ENCODE measurements at regions of chr18 and their contacts with region 1.

Region 1: DNA sequence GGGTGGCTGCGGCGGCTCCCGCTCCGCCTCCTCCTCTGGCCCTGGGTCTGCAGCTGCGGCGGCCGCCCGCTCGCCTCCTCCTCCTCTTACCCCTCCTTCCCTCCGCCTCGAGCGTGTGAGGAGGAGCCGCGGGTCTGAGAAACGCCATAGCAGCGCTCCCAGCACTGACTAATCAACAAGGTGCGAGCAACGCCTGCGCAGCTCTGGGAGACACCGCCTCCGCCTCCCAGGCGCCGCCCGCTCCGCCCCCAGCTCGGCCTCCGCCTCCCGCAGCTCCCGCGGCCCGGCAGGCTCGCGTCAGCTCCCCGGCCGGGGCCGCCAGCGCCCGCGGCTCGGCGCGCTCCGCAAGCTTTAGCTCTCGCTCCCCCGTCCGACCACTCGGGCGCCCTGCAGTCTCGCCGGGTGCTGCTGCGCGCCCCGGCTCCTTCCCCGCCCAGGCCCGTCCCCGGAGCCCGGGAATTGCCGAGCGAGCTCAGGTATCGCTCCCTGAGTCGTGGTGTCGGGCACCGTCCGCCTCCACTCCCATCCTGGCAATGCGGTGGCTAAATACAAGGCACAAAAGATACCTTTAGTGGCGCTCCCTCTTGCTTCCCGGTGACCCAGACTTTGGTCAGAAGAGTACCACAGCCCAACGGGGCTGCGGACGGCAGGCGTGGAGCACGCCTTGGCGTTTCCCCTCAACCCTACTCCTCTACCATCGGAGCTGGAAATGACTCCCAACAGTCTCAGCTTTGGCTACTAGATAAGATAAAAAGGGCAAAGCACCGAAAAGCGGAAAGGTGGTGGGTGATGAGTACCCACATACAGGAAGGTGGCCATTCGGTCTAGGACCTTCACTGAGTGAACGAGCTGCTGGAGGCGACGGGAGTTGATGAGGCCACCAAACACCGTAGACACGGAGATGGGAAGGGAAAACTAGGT is at the start of gene GAREM1:
- DNase-seq: peak; percentile 93 to 97 (median 96)
- ATAC-seq: peak; percentile 96 to 98 (median 98)
- H3K4me3 ChIP-seq: peak within 1 kb of the TSS; percentile 49 to 98 (median 77)
- H3K27ac ChIP-seq: peak within 1 kb of the TSS; percentile 56 to 88 (median 82)
- H3K4me1 ChIP-seq: peaks cover 0 to 42% (median 17%) of the 10 kb centered on the region in 12 donors
- H3K27me3 ChIP-seq: peaks cover 0 to 42% (median 0%) of the 10 kb centered on the region in 9 donors
- CTCF ChIP-seq: peak; percentile 35 to 94 (median 74)
- POLR2A ChIP-seq: peak; percentile 46 to 96
- total RNA-seq, gene GAREM1: 8.8 to 28.8 (median 13.4) TPM

Region 2: GRCh38 chr18:32271672-32272208 is 199.2 kb before region 1 on chr18:
- intact Hi-C with region 1: loop called (anchors 1 to 5 kb)
- DNase-seq: peak in 1 of 5 donors; percentile 30
- ATAC-seq: peak in 3 of 4 donors; percentile 55 to 77 (median 71)
- H3K4me3 ChIP-seq: no peak overlapping the region
- H3K27ac ChIP-seq: no peak overlapping the region
- H3K4me1 ChIP-seq: peaks cover 0 to 8% (median 0%) of the 10 kb centered on the region in 12 donors
- H3K27me3 ChIP-seq: no peaks in the 10 kb centered on the region
- CTCF ChIP-seq: peak; percentile 48 to 79 (median 69)
- POLR2A ChIP-seq: no peak

Region 3: DNA sequence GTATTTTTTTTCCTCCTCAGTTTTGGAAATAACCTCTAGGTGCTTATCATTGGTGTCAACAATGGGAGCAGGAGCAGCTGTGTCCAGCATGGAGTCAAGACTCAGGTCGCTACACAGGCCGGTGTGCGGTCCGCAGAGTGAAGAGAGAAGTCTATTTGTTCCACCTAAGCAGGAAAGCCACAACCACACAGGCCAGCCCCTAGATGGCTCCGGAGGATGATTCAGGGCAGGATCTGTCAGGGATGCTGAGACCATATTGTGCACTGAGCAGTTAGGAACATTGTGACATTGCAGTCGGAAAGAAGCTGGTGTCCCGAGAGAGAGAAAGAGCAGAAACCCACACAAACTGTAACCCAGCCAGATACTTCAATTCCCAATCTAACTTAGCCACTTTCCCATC is 137.2 kb before region 1 on chr18:
- intact Hi-C with region 1: loop called in 2 of 10 experiments (anchors 10 kb)
- DNase-seq: peak in 2 of 5 donors; percentile 15 to 35
- ATAC-seq: peak in 3 of 4 donors; percentile 70 to 76 (median 72)
- H3K4me3 ChIP-seq: no peak overlapping the region
- H3K27ac ChIP-seq: no peak overlapping the region
- H3K4me1 ChIP-seq: peaks cover 0 to 32% (median 5%) of the 10 kb centered on the region in 12 donors
- H3K27me3 ChIP-seq: no peaks in the 10 kb centered on the region
- CTCF ChIP-seq: peak in 5 of 12 donors; percentile 7 to 37 (median 22)
- POLR2A ChIP-seq: no peak

Region 4: DNA sequence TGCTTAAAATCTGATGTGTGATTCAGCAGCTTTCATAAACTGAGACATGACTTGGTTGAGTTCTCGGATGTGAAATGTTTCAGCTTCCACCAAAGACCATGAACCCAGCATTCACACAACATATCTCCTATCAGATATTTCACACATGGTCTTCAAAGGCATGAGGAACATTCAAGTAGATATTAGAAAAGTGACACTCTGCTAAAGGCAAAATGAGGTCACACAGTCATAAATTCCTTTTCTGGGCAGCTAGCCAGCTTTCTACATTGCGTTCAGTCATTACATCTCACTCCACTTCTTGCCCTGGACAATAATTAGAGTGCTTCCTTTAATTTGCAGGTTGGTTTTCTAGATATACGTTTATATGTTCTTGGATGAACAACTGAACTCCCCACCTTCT is 97.0 kb before region 1 on chr18:
- intact Hi-C with region 1: loop called in 2 of 10 experiments (anchors 10 kb)
- DNase-seq: peak in 1 of 5 donors; percentile 30
- ATAC-seq: peak in 2 of 4 donors; percentile 34 to 55
- H3K4me3 ChIP-seq: no peak overlapping the region
- H3K27ac ChIP-seq: peak overlapping the region in 4 of 12 donors; percentile 11 to 31 (median 17)
- H3K4me1 ChIP-seq: peaks cover 4 to 53% (median 15%) of the 10 kb centered on the region in 12 donors
- H3K27me3 ChIP-seq: no peaks in the 10 kb centered on the region
- CTCF ChIP-seq: no peak
- POLR2A ChIP-seq: no peak

Region 5: DNA sequence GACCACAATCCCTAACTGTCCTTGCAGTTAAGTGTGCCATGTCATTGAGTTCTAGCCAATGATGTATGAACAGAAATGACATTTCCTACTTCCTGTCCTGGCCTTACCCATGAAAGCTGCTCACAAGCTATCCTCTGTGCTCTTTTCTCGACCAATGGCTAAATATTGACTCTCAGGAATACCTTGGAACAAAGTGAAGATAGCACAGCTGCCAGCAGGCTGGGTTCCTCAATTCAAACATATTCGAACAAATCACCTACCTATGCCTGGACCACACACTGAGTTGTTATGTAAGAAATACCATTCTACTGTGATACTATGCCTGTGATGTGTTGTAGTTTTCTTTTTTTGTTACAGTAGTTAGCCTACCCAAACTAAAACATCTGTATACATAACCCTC is 65.4 kb before region 1 on chr18:
- intact Hi-C with region 1: no loop called
- DNase-seq: no peak
- ATAC-seq: no peak
- H3K4me3 ChIP-seq: no peak overlapping the region
- H3K27ac ChIP-seq: no peak overlapping the region
- H3K4me1 ChIP-seq: peaks cover 0 to 11% (median 5%) of the 10 kb centered on the region in 12 donors
- H3K27me3 ChIP-seq: no peaks in the 10 kb centered on the region
- CTCF ChIP-seq: no peak
- POLR2A ChIP-seq: no peak

Region 6: DNA sequence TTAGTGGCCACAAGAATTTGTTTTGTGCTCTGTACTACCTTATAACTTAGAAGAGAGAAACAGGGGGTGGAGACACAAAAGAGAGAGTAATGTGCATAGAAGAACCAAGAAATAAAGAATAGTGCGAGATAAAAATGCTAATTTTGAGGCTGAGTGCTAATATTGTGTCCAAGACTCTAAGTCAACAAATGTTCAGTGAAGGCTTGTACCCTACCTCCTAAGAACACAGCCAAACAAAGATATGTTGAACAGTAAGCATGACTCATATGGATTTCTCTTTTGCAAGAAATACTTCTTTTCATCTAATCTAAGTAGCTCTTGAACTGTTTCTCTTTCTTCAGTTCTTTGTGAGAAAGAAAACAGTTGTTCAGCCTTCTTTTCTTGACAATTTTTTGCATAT is 45.5 kb before region 1 on chr18:
- intact Hi-C with region 1: loop called in 2 of 10 experiments (anchors 5 kb)
- DNase-seq: no peak
- ATAC-seq: peak in 1 of 4 donors; percentile 50
- H3K4me3 ChIP-seq: no peak overlapping the region
- H3K27ac ChIP-seq: peak overlapping the region in 9 of 12 donors; percentile 18 to 64 (median 47)
- H3K4me1 ChIP-seq: peaks cover 0 to 83% (median 29%) of the 10 kb centered on the region in 12 donors
- H3K27me3 ChIP-seq: no peaks in the 10 kb centered on the region
- CTCF ChIP-seq: no peak
- POLR2A ChIP-seq: no peak